A673 (cell line): ENCODE measurements at regions of chr4 and their contacts with region 1.

Region 1: GRCh38 chr4:153785910-153786721 is 2.8 kb downstream of the SFRP2 start:
- DNase-seq: peak; percentile 51
- H3K4me3 ChIP-seq: no peak overlapping the region
- H3K27ac ChIP-seq: no peak overlapping the region
- H3K4me1 ChIP-seq: peaks cover 13% of the 10 kb centered on the region
- H3K27me3 ChIP-seq: peaks cover 51% of the 10 kb centered on the region
- CTCF ChIP-seq: peak; percentile 64

Region 2: GRCh38 chr4:152828122-152828521 is 958.0 kb before region 1 on chr4:
- CTCF ChIA-PET with region 1: no interaction called
- POLR2A ChIA-PET with region 1: no interaction called
- intact Hi-C with region 1: no loop called
- DNase-seq: no peak
- H3K4me3 ChIP-seq: no peak overlapping the region
- H3K27ac ChIP-seq: no peak overlapping the region
- H3K4me1 ChIP-seq: no peaks in the 10 kb centered on the region
- H3K27me3 ChIP-seq: no peaks in the 10 kb centered on the region
- CTCF ChIP-seq: no peak

Region 3: GRCh38 chr4:153634738-153635353 is 151.3 kb before region 1 on chr4:
- CTCF ChIA-PET with region 1: interaction called, 14 read pairs
- POLR2A ChIA-PET with region 1: no interaction called
- intact Hi-C with region 1: no loop called
- DNase-seq: peak; percentile 60
- H3K4me3 ChIP-seq: no peak overlapping the region
- H3K27ac ChIP-seq: no peak overlapping the region
- H3K4me1 ChIP-seq: no peaks in the 10 kb centered on the region
- H3K27me3 ChIP-seq: no peaks in the 10 kb centered on the region
- CTCF ChIP-seq: peak; percentile 76

Region 4: GRCh38 chr4:153771046-153771445 is 15.1 kb before region 1 on chr4:
- CTCF ChIA-PET with region 1: no interaction called
- POLR2A ChIA-PET with region 1: no interaction called
- intact Hi-C with region 1: no loop called
- DNase-seq: no peak
- H3K4me3 ChIP-seq: no peak overlapping the region
- H3K27ac ChIP-seq: no peak overlapping the region
- H3K4me1 ChIP-seq: no peaks in the 10 kb centered on the region
- H3K27me3 ChIP-seq: no peaks in the 10 kb centered on the region
- CTCF ChIP-seq: no peak

Region 5: GRCh38 chr4:154018659-154019058 is 232.5 kb after region 1 on chr4:
- CTCF ChIA-PET with region 1: interaction called, 6 read pairs
- POLR2A ChIA-PET with region 1: no interaction called
- intact Hi-C with region 1: loop called (anchors 5 kb)
- DNase-seq: peak; percentile 4
- H3K4me3 ChIP-seq: no peak overlapping the region
- H3K27ac ChIP-seq: no peak overlapping the region
- H3K4me1 ChIP-seq: no peaks in the 10 kb centered on the region
- H3K27me3 ChIP-seq: no peaks in the 10 kb centered on the region
- CTCF ChIP-seq: peak; percentile 37; the same call in 1 of the 2 replicates

Region 6: GRCh38 chr4:154082760-154083535 is 296.8 kb after region 1 on chr4:
- CTCF ChIA-PET with region 1: interaction called, 14 read pairs
- POLR2A ChIA-PET with region 1: no interaction called
- intact Hi-C with region 1: no loop called
- DNase-seq: peak; percentile 17
- H3K4me3 ChIP-seq: no peak overlapping the region
- H3K27ac ChIP-seq: no peak overlapping the region
- H3K4me1 ChIP-seq: no peaks in the 10 kb centered on the region
- H3K27me3 ChIP-seq: no peaks in the 10 kb centered on the region
- CTCF ChIP-seq: peak; percentile 47

Region 7: DNA sequence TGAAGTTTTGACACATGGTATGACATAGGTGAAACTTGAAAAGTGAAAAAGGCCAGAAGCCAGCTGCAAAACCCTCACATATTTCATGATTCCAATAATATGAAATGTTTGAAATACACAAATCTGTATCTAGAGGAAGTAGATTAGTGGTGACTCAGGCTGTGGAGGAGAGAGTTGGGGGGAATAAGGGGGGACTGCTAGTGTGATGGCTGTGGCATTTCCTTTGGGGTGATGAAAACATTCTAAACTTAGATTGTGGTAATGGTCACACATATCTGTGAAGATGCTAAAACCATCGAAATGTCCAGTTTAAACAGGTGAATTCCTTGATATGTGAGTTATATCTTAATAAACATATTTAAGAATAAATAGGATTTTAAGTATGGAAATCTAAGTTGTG is 346.3 kb after region 1 on chr4:
- CTCF ChIA-PET with region 1: interaction called, 16 read pairs
- POLR2A ChIA-PET with region 1: no interaction called
- intact Hi-C with region 1: no loop called
- DNase-seq: no peak
- H3K4me3 ChIP-seq: no peak overlapping the region
- H3K27ac ChIP-seq: no peak overlapping the region
- H3K4me1 ChIP-seq: no peaks in the 10 kb centered on the region
- H3K27me3 ChIP-seq: no peaks in the 10 kb centered on the region
- CTCF ChIP-seq: no peak

Region 8: GRCh38 chr4:154314248-154314647 is 528.1 kb after region 1 on chr4:
- CTCF ChIA-PET with region 1: no interaction called
- POLR2A ChIA-PET with region 1: no interaction called
- intact Hi-C with region 1: loop called (anchors 5 kb)
- DNase-seq: peak; percentile 55
- H3K4me3 ChIP-seq: no peak overlapping the region
- H3K27ac ChIP-seq: no peak overlapping the region
- H3K4me1 ChIP-seq: no peaks in the 10 kb centered on the region
- H3K27me3 ChIP-seq: no peaks in the 10 kb centered on the region
- CTCF ChIP-seq: peak; percentile 51

Region 9: GRCh38 chr4:154516318-154517029 is 730.4 kb after region 1 on chr4:
- CTCF ChIA-PET with region 1: interaction called, 11 read pairs
- POLR2A ChIA-PET with region 1: no interaction called
- intact Hi-C with region 1: no loop called
- DNase-seq: no peak
- H3K4me3 ChIP-seq: no peak overlapping the region
- H3K27ac ChIP-seq: no peak overlapping the region
- H3K4me1 ChIP-seq: no peaks in the 10 kb centered on the region
- H3K27me3 ChIP-seq: no peaks in the 10 kb centered on the region
- CTCF ChIP-seq: no peak